Heart right ventricle (tissue), 16 donors: ENCODE measurements at regions of chr11 and their contacts with region 1.

Region 1: GRCh38 chr11:68471360-68472340 is 11.1 kb downstream of the PPP6R3 start:
- DNase-seq: no peak
- ATAC-seq: peak in 5 of 8 donors; percentile 21 to 50 (median 27)
- H3K4me3 ChIP-seq: no peak overlapping the region
- H3K27ac ChIP-seq: peak overlapping the region in 1 of 10 donors; percentile 63
- H3K4me1 ChIP-seq: peaks cover 11 to 83% (median 78%) of the 10 kb centered on the region in 9 donors
- H3K27me3 ChIP-seq: no peaks in the 10 kb centered on the region
- CTCF ChIP-seq: no peak

Region 2: DNA sequence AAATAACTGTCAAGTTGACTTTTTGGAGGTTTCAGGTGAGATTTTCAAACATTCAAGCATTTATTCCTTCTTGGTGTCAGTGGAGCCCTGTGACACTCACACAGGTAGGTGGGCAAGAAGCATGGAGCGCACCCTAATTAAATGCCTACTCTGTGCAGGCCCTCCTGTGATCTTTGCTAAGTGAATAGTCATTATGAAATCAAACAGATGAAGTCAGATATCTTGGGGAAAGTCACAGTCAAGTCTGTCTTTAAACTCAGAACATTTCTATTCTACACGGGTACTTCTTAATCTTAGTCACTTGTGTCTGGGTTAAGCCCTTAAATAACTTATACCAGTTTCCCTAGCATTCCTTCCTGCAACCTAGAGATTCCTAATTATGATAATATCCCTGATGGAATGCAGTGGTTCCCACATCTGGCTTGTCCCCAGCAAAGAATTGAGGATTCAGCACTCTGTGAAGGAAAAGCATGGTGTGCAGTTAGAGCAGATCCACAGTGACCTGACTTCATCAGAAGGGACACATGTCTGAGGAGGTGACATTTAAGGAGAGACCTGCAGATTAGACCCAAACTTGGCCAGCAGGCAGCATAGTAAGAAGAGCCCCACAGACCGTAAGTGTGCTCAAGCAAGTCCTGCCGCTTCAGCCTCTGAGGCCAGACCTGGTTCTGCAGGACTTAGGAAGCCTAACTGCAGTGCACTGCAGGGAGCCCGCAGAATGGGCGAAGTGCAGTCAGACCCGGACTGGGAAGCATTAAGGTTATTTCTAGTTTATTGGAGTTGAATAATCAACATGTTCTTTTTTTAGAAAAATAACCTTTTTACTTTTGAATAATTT is 127.4 kb after region 1 on chr11:
- intact Hi-C with region 1: loop called in 2 of 10 experiments (anchors 10 kb)
- DNase-seq: no peak
- ATAC-seq: peak in 1 of 8 donors; percentile 24
- H3K4me3 ChIP-seq: no peak overlapping the region
- H3K27ac ChIP-seq: no peak overlapping the region
- H3K4me1 ChIP-seq: no peaks in the 10 kb centered on the region
- H3K27me3 ChIP-seq: no peaks in the 10 kb centered on the region
- CTCF ChIP-seq: no peak